CD4-positive, alpha-beta T cell (primary cell): ENCODE measurements at regions of chr1 and their contacts with region 1.

Region 1: GRCh38 chr1:51535006-51535592 is 16.0 kb upstream of the EPS15 start:
- DNase-seq: peak; percentile 9 to 66 (median 24)
- ATAC-seq: peak; percentile 48
- H3K4me3 ChIP-seq: no peak overlapping the region
- H3K4me3 Mint-ChIP-seq: no peak overlapping the region
- H3K27ac ChIP-seq: peak overlapping the region in 1 of 2 donors; percentile 3
- H3K27ac Mint-ChIP-seq: no peak overlapping the region
- H3K4me1 ChIP-seq: peaks cover 6% of the 10 kb centered on the region
- H3K4me1 Mint-ChIP-seq: peaks cover 9% of the 10 kb centered on the region
- H3K27me3 ChIP-seq: no peaks in the 10 kb centered on the region
- H3K27me3 Mint-ChIP-seq: no peaks in the 10 kb centered on the region
- CTCF ChIP-seq: peak; percentile 70

Region 2: DNA sequence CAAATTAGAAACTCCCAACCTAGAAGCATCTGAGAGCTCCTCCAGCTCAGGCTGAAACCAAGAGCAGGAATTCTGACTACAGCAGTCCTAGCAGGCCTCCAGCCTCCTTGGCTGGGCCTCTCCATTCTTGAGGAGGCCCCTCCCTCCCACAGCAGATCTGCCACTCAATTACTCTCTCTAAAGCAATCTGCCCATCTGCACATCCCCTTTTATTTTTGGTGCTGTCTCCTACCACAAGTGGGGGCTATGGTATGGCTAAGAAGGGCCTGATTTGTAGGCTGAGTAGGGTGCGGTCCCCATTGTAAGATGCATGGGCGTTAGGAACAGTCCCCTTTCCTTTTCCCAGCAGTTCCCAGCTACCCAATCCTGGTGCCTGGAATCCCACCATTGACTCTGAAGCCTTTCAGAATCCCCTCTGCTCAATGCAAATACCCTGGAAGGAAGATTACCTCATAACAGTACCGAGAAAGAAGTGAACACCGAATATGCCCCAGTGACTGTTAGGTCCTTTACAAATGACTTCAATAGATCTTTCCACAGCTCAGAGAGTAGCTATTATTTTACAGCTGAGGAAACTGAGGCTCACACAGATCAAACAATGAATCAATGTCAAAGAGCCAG is 193.1 kb before region 1 on chr1:
- CTCF ChIA-PET with region 1: no interaction called
- POLR2A ChIA-PET with region 1: no interaction called
- intact Hi-C with region 1: loop called in 1 of 2 experiments (anchors 10 kb)
- DNase-seq: no peak
- ATAC-seq: no peak
- H3K4me3 ChIP-seq: no peak overlapping the region
- H3K4me3 Mint-ChIP-seq: no peak overlapping the region
- H3K27ac ChIP-seq: no peak overlapping the region
- H3K27ac Mint-ChIP-seq: no peak overlapping the region
- H3K4me1 ChIP-seq: peaks cover 8% of the 10 kb centered on the region
- H3K4me1 Mint-ChIP-seq: peaks cover 5% of the 10 kb centered on the region
- H3K27me3 ChIP-seq: peaks cover 44 to 49% of the 10 kb centered on the region in 2 experiments
- H3K27me3 Mint-ChIP-seq: peaks cover 55% of the 10 kb centered on the region
- CTCF ChIP-seq: no peak

Region 3: GRCh38 chr1:51433269-51433971 is 101.7 kb before region 1 on chr1:
- CTCF ChIA-PET with region 1: no interaction called
- POLR2A ChIA-PET with region 1: no interaction called
- intact Hi-C with region 1: loop called in 1 of 2 experiments (anchors 10 kb)
- DNase-seq: peak in 2 of 14 experiments; percentile 10 to 76
- ATAC-seq: no peak
- H3K4me3 ChIP-seq: no peak overlapping the region
- H3K4me3 Mint-ChIP-seq: peak overlapping the region; percentile 49
- H3K27ac ChIP-seq: peak overlapping the region in 1 of 2 donors; percentile 3
- H3K27ac Mint-ChIP-seq: peak overlapping the region; percentile 52
- H3K4me1 ChIP-seq: peaks cover 34% of the 10 kb centered on the region
- H3K4me1 Mint-ChIP-seq: peaks cover 41% of the 10 kb centered on the region
- H3K27me3 ChIP-seq: no peaks in the 10 kb centered on the region
- H3K27me3 Mint-ChIP-seq: no peaks in the 10 kb centered on the region
- CTCF ChIP-seq: no peak

Region 4: DNA sequence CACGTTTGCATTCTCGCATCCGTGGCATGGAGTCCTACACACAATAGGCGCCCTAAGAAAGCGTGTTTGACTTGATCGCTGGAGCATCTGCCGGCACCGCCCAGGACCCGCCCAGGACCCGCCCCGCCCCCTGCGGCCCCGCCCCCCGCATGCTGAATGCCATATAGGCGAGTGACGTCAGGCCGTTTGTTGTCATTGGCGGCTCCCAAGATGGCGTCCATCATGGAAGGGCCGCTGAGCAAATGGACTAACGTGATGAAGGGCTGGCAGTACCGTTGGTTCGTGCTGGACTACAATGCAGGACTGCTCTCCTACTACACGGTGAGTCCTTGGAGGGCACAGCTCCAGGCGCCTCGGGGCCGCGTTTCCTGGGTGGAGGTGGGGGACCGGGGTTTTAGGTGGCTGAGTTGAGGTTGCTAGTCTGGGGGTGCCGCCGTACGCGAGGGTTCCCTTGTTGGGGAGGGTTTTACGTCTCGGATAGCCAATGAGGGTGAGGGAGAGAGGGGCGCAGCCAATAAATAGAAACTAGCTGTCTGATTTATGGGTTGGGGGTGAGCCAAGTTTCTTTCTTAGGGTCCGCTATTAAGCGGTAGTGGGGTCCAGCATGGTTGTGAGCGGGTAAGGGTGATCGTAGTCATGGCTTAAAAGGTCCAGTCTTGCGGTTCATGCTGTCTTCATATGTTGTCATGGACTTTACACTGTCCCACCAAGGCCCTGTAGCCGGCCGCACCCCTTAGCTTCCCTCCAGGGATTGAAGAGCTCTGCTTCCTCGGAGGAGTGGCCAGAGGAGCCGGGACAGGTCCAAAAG is 82.0 kb after region 1 on chr1 and contains the start of gene OSBPL9:
- CTCF ChIA-PET with region 1: no interaction called
- POLR2A ChIA-PET with region 1: no interaction called
- intact Hi-C with region 1: no loop called
- DNase-seq: peak; percentile 80 to 98 (median 85)
- ATAC-seq: peak; percentile 90
- H3K4me3 ChIP-seq: peak within 1 kb of the TSS; percentile 97
- H3K4me3 Mint-ChIP-seq: peak within 1 kb of the TSS; percentile 99
- H3K27ac ChIP-seq: peak within 1 kb of the TSS; percentile 61 to 73
- H3K27ac Mint-ChIP-seq: peak within 1 kb of the TSS; percentile 95
- H3K4me1 ChIP-seq: peaks cover 17% of the 10 kb centered on the region
- H3K4me1 Mint-ChIP-seq: peaks cover 47% of the 10 kb centered on the region
- H3K27me3 ChIP-seq: no peaks in the 10 kb centered on the region
- H3K27me3 Mint-ChIP-seq: no peaks in the 10 kb centered on the region
- CTCF ChIP-seq: no peak
- total RNA-seq, gene OSBPL9: 35.6 to 36.5 TPM